Dendritic cell treated with granulocyte-macrophage colony-stimulating factor and Interleukin-4, amounts not matched to agents 40 ng/mL and 50 ng/mL, for 4 days (primary cell): ENCODE measurements at regions of chr5 and their contacts with region 1.

Region 1: GRCh38 chr5:132064738-132065331 is 4.4 kb downstream of the IL3 start:
- H3K4me3 Mint-ChIP-seq: no peak overlapping the region
- H3K27ac Mint-ChIP-seq: no peak overlapping the region
- H3K4me1 Mint-ChIP-seq: peaks cover 11% of the 10 kb centered on the region
- H3K27me3 Mint-ChIP-seq: peaks cover 60% of the 10 kb centered on the region

Region 2: DNA sequence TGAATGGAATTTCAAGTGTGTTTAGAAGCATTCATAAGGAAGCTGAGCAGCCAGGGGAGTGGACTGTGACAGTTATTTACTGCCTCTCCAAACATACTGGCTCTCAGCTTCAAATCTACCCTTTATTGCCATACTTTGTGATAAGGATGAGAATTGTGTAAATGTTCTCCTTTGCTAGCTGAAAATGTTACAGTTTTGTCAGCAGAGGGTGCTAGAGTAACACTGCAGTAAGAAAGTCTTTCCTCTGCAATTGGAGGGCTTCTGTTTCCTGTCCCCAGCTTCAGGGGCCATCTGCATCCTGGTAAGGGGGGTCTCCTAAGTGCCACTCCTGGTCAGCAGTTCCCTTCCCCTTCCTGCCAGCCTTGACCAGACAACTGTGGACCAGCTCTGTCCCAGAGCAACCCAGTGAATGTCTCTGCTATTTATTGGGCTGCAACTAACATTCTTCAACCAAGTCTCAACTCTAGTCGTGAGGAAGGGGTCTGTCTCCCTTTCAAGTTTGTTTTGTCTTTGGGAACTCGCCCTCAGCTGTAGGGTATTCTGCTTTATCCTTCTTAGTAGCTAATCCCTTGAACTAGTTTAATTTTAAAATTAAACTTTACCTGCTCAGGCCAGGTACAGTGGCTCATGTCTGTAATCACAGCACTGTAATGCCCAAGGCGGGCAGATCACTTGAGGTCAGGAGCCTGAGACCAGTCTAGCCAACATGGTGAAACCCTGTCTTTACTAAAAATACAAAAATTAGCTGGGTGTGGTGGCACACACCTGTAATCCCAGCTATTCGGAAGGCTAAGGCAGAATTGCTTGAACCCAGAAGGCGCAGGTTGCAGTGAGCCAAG is 475.1 kb before region 1 on chr5:
- intact Hi-C with region 1: loop called (anchors 1 kb)
- H3K4me3 Mint-ChIP-seq: no peak overlapping the region
- H3K27ac Mint-ChIP-seq: no peak overlapping the region
- H3K4me1 Mint-ChIP-seq: peaks cover 16% of the 10 kb centered on the region
- H3K27me3 Mint-ChIP-seq: no peaks in the 10 kb centered on the region

Region 3: GRCh38 chr5:132134384-132134783 is 69.5 kb after region 1 on chr5:
- intact Hi-C with region 1: loop called (anchors 2 kb)
- H3K4me3 Mint-ChIP-seq: no peak overlapping the region
- H3K27ac Mint-ChIP-seq: no peak overlapping the region
- H3K4me1 Mint-ChIP-seq: no peaks in the 10 kb centered on the region
- H3K27me3 Mint-ChIP-seq: peaks cover 31% of the 10 kb centered on the region

Region 4: GRCh38 chr5:132238169-132238744 is 173.4 kb after region 1 on chr5:
- intact Hi-C with region 1: loop called (anchors 10 kb)
- H3K4me3 Mint-ChIP-seq: no peak overlapping the region
- H3K27ac Mint-ChIP-seq: no peak overlapping the region
- H3K4me1 Mint-ChIP-seq: peaks cover 5% of the 10 kb centered on the region
- H3K27me3 Mint-ChIP-seq: peaks cover 4% of the 10 kb centered on the region